ENCODE measurements at regions of chr17 and their contacts with region 1.

Region 1: DNA sequence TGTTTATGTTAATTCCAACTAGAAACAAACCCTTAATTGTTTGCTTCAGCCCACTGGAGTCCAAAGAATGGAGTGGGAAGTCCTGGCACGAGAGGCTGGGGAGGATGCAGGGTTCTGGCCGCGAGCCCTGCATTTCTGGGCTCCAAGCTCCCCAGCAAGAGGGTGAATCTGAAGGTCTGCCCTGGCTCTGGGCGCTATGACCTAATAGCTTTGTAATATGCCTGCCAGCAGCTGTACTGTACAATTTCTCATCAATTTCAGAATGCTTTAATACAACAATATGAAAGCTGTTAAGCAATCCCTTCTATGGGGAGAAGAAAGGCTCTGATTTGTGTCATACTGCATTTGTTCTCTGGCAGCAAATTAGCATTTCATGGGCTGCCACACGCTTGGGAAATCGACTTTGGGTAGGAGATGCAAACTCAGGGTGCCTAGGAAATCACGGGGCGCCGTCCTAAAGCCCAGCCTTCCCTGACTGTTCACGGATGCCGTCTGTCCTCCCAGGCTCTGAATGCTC is 43.8 kb downstream of the NDEL1 start:
- DNase-seq: peak in 1 of 2 donors; percentile 77
- H3K4me3 ChIP-seq: no peak overlapping the region
- H3K27ac ChIP-seq: peak overlapping the region; percentile 54 to 61
- H3K4me1 ChIP-seq: peaks cover 6 to 22% of the 10 kb centered on the region in 2 donors
- H3K27me3 ChIP-seq: no peaks in the 10 kb centered on the region
- CTCF ChIP-seq: no peak

Region 2: DNA sequence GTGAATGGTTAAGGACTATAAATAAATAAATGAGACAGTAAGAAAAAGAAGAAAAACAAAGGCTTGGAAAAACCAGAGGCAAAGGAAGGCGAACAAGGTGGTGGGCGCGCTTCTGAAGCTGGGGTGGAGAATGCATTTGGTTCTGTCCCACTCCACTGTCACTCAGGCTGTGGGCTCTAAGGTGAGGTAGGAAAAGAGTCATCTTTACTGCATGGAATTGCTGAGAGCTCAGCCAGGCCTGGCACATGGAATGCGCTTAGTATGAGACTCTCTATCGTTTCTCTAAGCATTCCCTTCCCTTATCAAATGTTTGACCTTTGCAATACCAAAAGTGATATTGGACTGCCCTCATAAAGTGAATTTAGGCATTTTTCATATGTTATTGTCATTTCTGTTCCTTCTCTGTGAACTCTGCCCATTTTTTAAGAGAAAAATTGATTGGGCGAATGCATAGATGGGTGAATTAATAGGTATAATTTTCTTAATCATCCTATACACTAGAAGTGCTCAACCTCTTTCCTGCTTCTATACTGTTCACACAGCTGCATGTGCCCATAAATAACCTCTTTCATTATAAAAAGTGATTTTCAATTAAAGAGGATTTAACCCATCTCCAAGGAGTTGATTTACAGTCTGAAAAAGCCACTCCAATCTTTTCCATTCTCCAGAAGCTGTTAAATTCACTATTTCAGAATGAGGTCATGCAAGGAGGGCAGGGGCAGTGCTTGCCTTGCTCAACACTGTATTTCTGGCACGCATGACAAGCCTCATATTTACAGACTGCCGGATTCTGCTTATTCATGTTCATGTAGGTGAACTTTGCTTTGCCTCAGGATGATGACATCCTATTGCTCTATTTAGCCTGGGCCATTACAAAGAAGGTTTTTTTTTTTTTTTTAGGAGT is 63.4 kb after region 1 on chr17:
- intact Hi-C with region 1: loop called (anchors 5 kb)
- DNase-seq: peak; percentile 29 to 88
- H3K4me3 ChIP-seq: no peak overlapping the region
- H3K27ac ChIP-seq: peak overlapping the region; percentile 9 to 63
- H3K4me1 ChIP-seq: peaks cover 0 to 3% of the 10 kb centered on the region in 2 donors
- H3K27me3 ChIP-seq: no peaks in the 10 kb centered on the region
- CTCF ChIP-seq: no peak

Region 3: DNA sequence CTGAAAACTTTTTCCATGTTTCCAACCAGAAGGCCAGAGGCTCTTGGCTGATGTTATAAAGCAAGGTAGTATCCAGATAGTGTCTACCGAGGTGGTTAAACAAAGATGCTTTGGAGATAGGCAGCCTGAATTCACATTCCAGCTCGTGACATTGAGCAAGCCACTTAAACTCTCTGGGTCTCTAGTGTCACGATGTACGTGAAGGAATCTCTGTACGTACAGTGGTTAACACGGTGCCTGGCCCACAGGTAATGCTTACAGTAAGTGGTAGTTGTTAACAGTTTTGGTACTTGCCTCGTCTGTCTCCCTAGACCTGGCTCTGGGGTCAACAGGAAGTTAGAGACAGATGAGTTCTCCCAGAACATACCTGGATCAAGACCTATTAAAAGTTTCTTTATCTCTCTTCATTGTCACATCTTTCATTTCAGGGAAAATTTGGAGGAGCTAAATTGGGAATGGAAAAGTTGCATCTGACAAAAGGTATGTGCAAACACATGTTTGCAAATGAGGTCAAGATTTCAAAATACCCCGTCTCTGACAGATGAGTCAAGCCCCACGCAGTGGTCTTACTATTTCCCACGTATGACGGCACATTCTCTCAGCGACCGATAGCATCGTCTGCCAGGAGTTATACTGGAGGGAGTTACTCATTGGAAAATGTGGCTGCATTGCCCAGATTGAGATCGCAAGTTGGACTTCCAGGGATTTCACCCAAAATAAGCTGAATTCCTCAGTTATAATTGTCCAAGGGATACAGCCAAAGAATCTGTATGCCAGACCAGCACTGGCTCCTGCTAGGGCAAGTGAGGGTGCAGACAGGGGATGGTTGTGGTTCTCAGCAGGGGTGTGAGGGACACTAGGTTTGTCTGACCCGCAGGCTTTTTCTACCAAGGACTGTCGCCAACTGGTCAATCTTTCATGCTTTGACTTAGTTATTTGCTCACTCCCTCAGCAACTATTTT is 169.9 kb after region 1 on chr17:
- intact Hi-C with region 1: no loop called
- DNase-seq: peak; percentile 76 to 96
- H3K4me3 ChIP-seq: no peak overlapping the region
- H3K27ac ChIP-seq: peak overlapping the region; percentile 89 to 98
- H3K4me1 ChIP-seq: peaks cover 6 to 32% of the 10 kb centered on the region in 2 donors
- H3K27me3 ChIP-seq: no peaks in the 10 kb centered on the region
- CTCF ChIP-seq: no peak